ENCODE measurements at regions of chr3 and their contacts with region 1.

Region 1: GRCh38 chr3:124688581-124689454 is 41.4 kb upstream of the UMPS start:
- DNase-seq: peak; percentile 84
- CTCF ChIP-seq: peak; percentile 88

Region 2: GRCh38 chr3:124559881-124560574 is 128.8 kb before region 1 on chr3:
- CTCF ChIA-PET with region 1: interaction called, 305 read pairs
- POLR2A ChIA-PET with region 1: no interaction called
- DNase-seq: peak; percentile 77
- CTCF ChIP-seq: peak; percentile 86

Region 3: DNA sequence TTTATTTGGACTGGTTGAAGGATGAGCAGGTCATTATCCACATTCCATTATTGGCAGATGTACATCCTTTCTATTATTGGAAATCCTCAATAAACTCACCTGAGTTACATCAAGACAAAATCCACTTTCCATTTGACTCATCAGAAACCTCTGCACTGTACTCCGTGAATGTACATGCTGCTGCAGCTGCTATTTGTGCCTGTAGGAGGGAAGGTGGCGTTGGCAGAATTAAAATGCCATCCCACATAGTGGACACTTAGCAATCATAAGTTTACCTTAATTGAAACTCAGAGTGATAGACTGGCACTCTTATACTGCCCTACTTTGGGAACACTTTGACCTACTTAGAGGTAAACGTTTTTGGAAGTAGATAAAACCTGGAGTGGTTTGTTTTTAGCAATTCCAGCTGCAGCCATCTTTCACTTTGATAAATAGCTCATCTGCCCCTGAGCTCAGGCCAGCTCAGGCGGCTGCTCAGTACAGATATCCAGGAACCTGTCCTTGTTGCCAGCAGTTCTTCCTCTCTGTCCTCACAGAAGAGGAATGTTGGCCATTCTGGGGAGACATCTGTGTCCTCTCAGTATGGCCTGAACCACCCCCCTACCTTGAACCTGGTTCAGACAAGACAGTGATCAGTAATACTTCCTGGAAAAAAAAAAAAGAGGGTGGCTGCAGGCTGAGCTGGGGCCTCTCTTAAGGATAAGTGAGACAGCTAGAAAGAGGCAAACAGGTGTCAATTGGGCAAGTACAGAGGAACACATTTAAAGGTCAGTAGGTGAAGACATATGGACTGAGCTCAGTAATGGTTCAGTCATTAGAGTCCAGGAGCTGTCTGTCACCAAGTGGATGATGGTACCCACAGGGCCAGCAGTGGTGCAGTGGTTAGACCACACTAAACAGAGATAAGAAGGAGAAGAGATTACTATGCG is 112.0 kb before region 1 on chr3:
- CTCF ChIA-PET with region 1: interaction called, 42 read pairs
- POLR2A ChIA-PET with region 1: no interaction called
- DNase-seq: no peak
- CTCF ChIP-seq: no peak

Region 4: DNA sequence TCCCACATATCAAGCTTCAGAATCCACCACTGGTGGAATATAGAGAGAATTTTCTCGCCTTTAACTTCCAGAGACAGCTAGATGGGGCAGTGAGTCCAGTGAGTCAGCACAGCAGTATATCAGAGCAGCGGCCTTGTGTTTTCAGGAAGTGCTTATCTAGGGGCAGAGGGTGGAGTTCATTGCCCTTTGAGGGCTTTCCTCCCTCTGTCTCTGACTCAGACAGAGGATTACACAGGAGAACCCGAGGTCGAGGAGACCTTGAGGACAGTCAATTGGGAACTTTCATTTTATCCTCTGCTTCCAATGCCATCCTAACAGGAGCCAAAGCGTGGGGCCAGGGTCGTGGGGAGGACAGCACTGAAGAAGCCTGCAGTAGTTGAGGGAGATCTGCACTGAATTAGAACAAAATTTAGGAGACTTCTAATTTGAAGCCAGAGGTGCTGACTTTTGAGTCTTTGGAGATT is 68.2 kb before region 1 on chr3:
- CTCF ChIA-PET with region 1: interaction called, 17 read pairs
- POLR2A ChIA-PET with region 1: no interaction called
- DNase-seq: peak; percentile 47
- CTCF ChIP-seq: peak; percentile 42

Region 5: DNA sequence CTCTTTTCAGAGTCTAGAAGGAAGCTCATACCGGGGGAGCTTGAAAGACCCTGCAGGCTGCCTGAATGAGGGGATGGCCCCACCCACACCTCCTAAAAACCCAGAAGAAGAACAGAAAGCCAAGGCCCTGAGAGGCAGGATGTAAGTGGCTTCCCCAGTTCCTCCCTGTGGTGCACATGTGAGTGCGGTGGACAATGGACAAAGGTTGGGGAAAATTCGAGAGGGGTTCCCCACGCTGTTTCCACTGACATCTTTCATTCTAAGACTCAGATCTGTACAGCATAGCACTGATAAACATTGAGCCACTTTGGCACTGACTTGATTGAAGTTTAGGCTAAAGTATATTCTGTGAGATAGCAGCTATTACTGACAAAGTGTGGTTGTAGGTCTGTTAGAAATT is 38.0 kb before region 1 on chr3:
- CTCF ChIA-PET with region 1: interaction called, 30 read pairs
- POLR2A ChIA-PET with region 1: no interaction called
- DNase-seq: peak; percentile 57
- CTCF ChIP-seq: no peak

Region 6: DNA sequence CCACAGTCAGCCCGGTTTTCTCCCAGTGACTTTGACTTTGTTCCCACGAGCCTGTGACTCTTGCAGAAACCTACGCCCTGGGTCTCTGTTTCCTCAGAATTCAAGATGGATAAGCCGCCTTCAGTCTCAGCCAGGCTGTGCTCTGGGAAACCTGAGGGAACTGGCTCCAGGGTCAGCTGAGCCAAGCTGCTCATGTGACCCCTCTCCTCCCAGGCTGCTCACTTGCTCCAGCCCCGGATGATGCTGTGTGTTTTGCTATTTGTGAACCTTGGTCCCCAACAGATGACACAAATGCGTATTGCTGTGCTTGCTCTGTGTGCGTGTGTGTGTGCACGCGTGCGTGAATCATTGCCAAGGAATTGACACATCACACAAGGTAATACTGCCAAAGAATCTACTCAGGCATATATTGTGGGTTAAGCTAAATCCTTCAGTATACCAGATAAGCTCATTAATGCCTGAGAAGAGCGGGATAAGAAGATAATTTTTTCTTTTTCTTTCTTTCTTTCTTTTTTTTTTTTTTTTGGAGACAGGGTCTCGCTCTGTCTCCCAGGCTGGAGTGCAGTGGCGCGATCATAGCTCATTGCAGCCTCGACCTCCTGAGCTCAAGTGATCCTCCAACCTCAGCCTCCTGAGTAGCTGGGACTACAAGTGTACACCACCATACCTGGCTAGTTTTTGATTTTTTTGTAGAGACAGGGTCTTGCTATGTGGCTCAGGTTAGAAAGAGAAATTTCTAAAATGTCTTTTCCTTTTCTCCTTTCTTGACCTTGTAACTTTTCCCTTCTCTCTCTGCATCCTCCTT is 12.3 kb after region 1 on chr3:
- CTCF ChIA-PET with region 1: interaction called, 39 read pairs
- POLR2A ChIA-PET with region 1: no interaction called
- DNase-seq: no peak
- CTCF ChIP-seq: no peak